PC-3 (cell line): ENCODE measurements at regions of chr3 and their contacts with region 1.

Region 1: DNA sequence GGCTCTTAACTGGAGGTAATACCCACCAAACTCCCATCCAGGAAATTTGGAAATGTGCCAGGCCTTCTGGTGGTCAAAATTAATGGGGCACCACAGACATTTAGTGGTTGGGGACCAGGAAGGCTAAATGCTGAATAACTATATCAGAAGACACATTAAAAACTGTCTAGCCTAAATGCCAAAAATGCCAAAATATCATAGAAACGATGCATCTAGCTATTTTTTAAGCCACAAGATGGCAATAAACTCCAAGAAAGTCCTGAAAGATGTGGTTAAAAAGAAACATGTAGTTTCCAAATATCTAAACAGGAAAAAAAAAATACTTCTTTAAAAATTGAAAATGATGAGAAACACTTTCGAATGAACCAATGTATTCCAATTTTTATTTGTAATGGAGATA is 19.9 kb downstream of the CCDC14 start:
- DNase-seq: no peak
- ATAC-seq: no peak
- H3K4me3 ChIP-seq: no peak overlapping the region
- H3K27ac ChIP-seq: no peak overlapping the region
- H3K4me1 ChIP-seq: no peaks in the 10 kb centered on the region
- H3K27me3 ChIP-seq: no peaks in the 10 kb centered on the region
- CTCF ChIP-seq: peak; percentile 48

Region 2: DNA sequence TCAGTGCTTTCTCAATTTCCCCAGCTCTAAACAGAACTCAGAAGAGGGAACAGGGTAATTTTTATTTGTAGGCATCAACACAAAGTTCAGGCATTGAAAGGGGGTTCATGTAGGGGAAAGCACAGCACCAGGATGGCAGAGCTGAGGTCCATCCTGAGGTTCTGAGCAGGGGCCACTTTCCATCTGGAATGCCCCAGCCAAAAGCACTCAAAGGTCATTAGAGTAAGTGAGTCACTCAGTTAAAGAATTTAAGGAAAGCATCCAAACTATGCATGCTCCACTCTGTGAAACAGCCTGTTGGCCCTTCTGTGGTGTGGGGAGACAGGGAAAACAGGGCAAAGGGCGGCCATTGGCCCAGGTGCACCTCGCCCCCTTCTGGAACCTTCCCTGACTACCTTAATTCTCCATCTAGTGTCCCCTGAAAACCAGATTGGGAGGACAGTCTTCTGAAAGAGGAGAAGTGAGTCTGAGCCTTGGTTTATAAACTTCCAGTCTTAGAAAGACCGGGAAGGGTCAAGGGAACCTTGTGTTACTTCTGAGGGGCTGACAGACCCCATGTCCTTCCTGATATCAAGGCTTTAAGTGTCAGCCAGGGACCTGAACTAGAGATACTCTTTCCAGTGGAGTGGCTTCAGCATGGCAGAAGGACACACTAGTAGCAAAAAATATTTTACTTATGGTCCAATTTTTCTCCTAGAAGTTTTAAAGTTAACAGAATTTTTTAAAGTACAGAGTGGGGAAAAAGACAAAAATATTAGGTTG is 190.3 kb before region 1 on chr3:
- CTCF ChIA-PET with region 1: no interaction called
- POLR2A ChIA-PET with region 1: no interaction called
- intact Hi-C with region 1: loop called (anchors 1 kb)
- DNase-seq: peak; percentile 95
- ATAC-seq: peak; percentile 94
- H3K4me3 ChIP-seq: no peak overlapping the region
- H3K27ac ChIP-seq: 0 out of 2 replicates have a peak overlapping the region, but pooled peaks have one; percentile 9
- H3K4me1 ChIP-seq: peaks cover 23% of the 10 kb centered on the region
- H3K27me3 ChIP-seq: no peaks in the 10 kb centered on the region
- CTCF ChIP-seq: no peak; the same call in 1 of the 2 replicates